ENCODE measurements at regions of chr14 and their contacts with region 1.

Region 1: DNA sequence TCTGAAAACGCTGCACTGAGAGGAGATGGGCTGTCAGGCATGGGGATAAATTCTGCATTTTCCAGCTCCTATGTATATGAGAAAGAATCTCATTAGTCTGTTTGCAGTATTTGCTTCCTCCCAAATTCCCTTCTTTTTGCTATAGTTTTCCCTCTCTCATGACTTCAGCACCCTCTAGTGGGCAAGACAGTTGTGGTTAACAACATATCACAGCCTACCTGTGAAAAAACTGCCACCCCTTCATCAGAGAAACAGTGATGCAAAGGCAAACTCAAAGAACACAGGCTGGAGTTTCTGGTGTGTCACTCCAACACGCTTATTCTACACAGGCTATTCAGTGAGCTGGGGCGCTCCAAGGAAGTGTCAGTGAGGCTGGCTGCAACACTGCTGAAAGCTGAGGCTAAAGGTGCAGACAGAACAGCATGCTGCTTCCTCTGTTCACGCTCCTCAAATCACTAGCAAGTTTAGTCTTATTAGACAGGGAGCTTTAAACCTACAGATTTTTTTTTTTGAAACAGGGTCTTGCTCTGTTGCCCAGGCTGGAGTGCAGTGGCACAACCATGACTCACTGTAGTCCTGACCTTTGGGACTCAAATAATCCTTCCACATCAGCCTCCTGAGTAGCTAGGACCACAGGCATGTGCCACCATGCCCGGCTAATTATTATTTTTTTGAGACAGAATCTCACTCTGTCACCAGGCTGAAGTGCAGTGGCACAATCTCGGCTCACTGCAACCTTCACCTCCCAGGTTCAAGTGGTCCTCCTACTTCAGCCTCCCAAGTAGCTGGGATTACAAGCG is 19.3 kb downstream of the ZC2HC1C start:
- DNase-seq: peak; percentile 65
- ATAC-seq: peak; percentile 69
- H3K4me3 Mint-ChIP-seq: no peak overlapping the region
- H3K27ac Mint-ChIP-seq: no peak overlapping the region
- H3K4me1 Mint-ChIP-seq: no peaks in the 10 kb centered on the region
- H3K27me3 Mint-ChIP-seq: no peaks in the 10 kb centered on the region

Region 2: GRCh38 chr14:74875941-74876913 is 212.5 kb before region 1 on chr14 and contains the start of gene PROX2:
- CTCF ChIA-PET with region 1: interaction called, 13 read pairs
- POLR2A ChIA-PET with region 1: no interaction called
- DNase-seq: peak; percentile 46
- ATAC-seq: peak; percentile 87
- H3K4me3 Mint-ChIP-seq: peak within 1 kb of the TSS; percentile 37
- H3K27ac Mint-ChIP-seq: peak within 1 kb of the TSS; percentile 82
- H3K4me1 Mint-ChIP-seq: peaks cover 37% of the 10 kb centered on the region
- H3K27me3 Mint-ChIP-seq: no peaks in the 10 kb centered on the region
- total RNA-seq, gene PROX2: 0.13 to 0.44 TPM

Region 3: GRCh38 chr14:74945823-74946682 is 142.7 kb before region 1 on chr14:
- CTCF ChIA-PET with region 1: interaction called, 57 read pairs
- POLR2A ChIA-PET with region 1: no interaction called
- DNase-seq: peak; percentile 86
- ATAC-seq: peak; percentile 75
- H3K4me3 Mint-ChIP-seq: no peak overlapping the region
- H3K27ac Mint-ChIP-seq: peak overlapping the region; percentile 68
- H3K4me1 Mint-ChIP-seq: peaks cover 31% of the 10 kb centered on the region
- H3K27me3 Mint-ChIP-seq: no peaks in the 10 kb centered on the region

Region 4: DNA sequence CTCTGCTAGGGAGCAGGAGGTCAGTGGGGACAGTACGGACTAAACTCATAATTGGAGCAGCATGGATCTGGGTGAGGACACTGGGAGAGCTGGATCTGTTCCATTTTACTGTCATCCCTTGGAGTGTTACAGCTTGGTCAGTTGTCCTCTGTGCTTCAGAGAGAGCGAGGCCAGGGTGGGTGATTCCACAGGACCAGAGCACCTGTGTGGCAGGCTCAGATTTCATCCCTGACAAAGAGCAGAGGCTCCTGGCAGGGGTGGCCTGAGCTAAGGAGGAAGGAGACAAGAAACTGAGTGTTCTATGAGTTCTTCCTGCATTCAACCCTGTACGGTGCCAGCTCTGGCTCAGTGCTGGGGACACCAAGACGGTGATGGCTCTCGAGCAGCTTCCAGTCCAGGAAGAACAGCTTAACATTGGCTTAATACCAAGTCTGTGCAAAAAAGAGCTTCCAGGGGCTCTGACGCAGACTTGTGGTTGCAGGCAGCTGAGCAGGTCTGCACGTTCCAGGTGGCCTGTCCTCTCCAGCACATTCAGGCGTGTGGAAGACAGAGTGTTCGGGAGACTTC is 125.0 kb before region 1 on chr14:
- CTCF ChIA-PET with region 1: interaction called, 14 read pairs
- POLR2A ChIA-PET with region 1: no interaction called
- DNase-seq: no peak
- ATAC-seq: peak; percentile 36
- H3K4me3 Mint-ChIP-seq: no peak overlapping the region
- H3K27ac Mint-ChIP-seq: no peak overlapping the region
- H3K4me1 Mint-ChIP-seq: peaks cover 20% of the 10 kb centered on the region
- H3K27me3 Mint-ChIP-seq: peaks cover 16% of the 10 kb centered on the region

Region 5: DNA sequence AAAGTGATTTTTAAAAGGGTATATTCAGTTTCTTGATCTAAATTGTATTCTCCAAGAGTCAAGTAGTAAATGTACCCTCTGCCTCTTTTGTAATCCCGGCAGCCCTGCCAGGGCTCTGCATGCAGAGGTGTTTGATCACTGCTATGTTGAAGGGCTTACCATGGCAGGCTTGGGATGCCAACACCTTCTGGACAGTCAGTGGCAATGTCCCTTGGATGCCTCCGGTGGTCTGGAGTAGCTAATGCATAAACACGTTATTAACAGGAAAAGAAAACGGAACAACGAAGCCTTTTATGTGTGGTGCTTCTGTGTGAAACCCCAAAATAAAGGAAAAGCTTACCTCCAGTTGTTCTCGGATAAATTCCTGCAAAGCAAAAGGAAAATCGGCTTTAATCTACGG is 66.1 kb before region 1 on chr14:
- CTCF ChIA-PET with region 1: interaction called, 13 read pairs
- POLR2A ChIA-PET with region 1: no interaction called
- DNase-seq: peak; percentile 28
- ATAC-seq: no peak
- H3K4me3 Mint-ChIP-seq: no peak overlapping the region
- H3K27ac Mint-ChIP-seq: no peak overlapping the region
- H3K4me1 Mint-ChIP-seq: no peaks in the 10 kb centered on the region
- H3K27me3 Mint-ChIP-seq: no peaks in the 10 kb centered on the region

Region 6: DNA sequence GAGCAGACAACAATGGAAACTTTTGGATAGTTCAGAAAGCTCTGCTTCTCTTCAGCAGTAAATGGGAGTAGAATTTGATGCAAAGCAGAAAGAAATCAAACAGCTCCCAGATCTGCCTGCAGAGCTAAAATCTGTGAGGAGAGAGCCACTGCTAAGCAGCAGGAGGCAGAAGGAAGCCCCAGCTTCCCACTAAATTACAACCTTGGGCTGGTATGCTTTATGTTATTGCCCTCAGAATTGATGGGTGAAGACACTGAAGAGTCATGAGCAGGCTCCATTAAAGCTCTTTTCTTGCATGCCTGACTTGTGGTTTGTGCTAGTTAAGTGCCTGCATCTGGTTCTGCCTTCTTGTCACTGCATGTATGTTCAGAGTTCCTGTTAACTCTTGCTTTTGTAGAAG is 11.0 kb before region 1 on chr14:
- CTCF ChIA-PET with region 1: interaction called, 11 read pairs
- POLR2A ChIA-PET with region 1: no interaction called
- DNase-seq: no peak
- ATAC-seq: no peak
- H3K4me3 Mint-ChIP-seq: no peak overlapping the region
- H3K27ac Mint-ChIP-seq: no peak overlapping the region
- H3K4me1 Mint-ChIP-seq: no peaks in the 10 kb centered on the region
- H3K27me3 Mint-ChIP-seq: no peaks in the 10 kb centered on the region